ENCODE measurements at regions of chr19 and their contacts with region 1.

Region 1: GRCh38 chr19:39480337-39481228 is at the start of gene TIMM50:
- DNase-seq: peak; percentile 98 to 99 (median 98)
- ATAC-seq: peak; percentile 95 to 99 (median 98)
- H3K4me3 ChIP-seq: peak within 1 kb of the TSS; percentile 75 to 100 (median 90)
- H3K27ac ChIP-seq: peak within 1 kb of the TSS; percentile 4 to 89 (median 82)
- H3K4me1 ChIP-seq: peaks cover 0 to 24% (median 16%) of the 10 kb centered on the region in 12 donors
- H3K27me3 ChIP-seq: no peaks in the 10 kb centered on the region
- CTCF ChIP-seq: peak in 1 of 12 donors; percentile 19
- POLR2A ChIP-seq: peak in 1 of 2 donors; percentile 63
- total RNA-seq, gene TIMM50: 66.0 to 91.3 (median 77.3) TPM

Region 2: GRCh38 chr19:39435499-39436349 is 44.9 kb before region 1 on chr19 and contains the start of gene RPS16:
- intact Hi-C with region 1: loop called in 1 of 10 experiments (anchors 5 kb)
- DNase-seq: peak; percentile 99
- ATAC-seq: peak; percentile 97 to 99 (median 99)
- H3K4me3 ChIP-seq: peak within 1 kb of the TSS; percentile 60 to 99 (median 90)
- H3K27ac ChIP-seq: peak within 1 kb of the TSS; percentile 73 to 93 (median 86)
- H3K4me1 ChIP-seq: peaks cover 11 to 40% (median 23%) of the 10 kb centered on the region in 12 donors
- H3K27me3 ChIP-seq: peaks cover 0 to 5% (median 0%) of the 10 kb centered on the region in 9 donors
- CTCF ChIP-seq: peak in 1 of 12 donors; percentile 18
- POLR2A ChIP-seq: peak; percentile 70 to 96
- total RNA-seq, gene RPS16: 617 to 1,566 (median 1,374) TPM

Measured in heart left ventricle (tissue), 16 donors.